B cell (primary cell): ENCODE measurements at regions of chr1 and their contacts with region 1.

Region 1: DNA sequence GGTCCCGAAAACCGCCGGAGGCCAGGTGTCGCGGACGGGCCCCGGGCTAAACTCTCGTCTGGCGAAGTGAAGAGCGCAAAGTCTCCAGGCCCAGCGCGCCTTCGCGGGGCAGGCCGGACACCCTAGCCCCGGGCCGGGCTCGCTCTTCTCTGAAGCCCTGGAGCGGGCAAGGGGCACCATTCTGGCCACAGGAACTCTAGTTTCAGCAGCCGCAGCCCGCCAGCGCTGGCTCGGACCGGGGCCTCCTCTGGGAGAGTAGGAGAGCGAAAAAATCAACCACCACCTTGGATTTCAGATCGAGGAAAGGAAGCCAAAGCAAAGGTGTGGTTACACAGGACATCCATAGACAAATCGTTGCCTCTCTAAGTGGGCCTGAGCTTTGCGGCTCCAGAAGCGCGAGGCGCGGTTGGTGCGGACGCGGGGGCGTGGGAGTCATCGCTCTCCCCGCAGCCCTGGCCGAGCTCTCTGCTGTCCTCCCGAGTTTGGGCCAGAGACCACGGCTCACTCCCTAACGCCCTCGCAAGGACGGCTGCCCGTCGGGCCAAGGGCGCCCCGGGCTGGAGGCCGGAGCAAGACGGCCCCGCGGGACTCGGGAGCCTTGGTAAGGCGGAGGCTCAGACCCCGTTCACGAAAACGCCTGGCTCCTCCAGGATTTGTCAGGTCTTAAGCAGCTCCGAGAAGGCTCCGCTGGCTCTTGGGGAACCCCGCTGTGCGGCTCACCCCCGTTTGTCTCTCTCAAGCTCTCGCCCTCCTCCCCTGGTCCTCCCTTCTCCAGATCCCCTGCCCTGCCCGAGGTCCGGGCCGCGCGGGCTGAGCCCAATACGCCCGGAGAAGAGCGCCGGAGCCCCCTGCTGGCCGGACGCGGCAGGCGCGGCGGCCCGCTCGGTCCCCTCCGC is 132.9 kb upstream of the DPYD start:
- DNase-seq: peak; percentile 67
- ATAC-seq: peak; percentile 88
- H3K4me3 ChIP-seq: peak overlapping the region in 4 of 5 experiments; percentile 9 to 47 (median 40)
- H3K4me3 Mint-ChIP-seq: peak overlapping the region; percentile 57
- H3K27ac ChIP-seq: no peak overlapping the region
- H3K27ac Mint-ChIP-seq: no peak overlapping the region
- H3K4me1 ChIP-seq: peaks cover 15 to 24% of the 10 kb centered on the region in 2 donors
- H3K4me1 Mint-ChIP-seq: peaks cover 15% of the 10 kb centered on the region
- H3K27me3 ChIP-seq: peaks cover 0 to 52% (median 42%) of the 10 kb centered on the region in 4 experiments
- H3K27me3 Mint-ChIP-seq: peaks cover 59% of the 10 kb centered on the region
- CTCF ChIP-seq: peak; percentile 82

Region 2: DNA sequence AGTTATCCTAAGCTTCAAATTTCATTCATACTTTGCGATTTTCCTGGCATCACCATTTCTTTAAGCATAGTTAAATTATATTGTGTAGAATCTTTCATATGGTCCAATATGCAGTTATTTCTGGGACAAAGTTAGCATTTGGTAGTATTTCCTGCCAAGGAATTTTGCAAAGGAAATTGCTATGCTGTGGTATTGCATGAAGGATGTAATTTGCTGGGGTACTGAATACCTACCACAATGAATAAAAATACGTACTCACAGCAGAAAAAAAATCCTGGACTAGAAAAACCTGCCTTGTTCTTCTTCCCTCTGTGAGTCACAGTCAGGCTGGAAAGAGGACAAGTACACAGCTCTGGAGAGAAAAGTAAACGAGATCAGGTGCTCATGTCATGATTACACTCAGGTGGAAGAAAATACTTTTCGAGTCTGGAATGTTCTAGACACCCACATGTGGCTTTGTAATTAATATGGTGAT is 1090.9 kb before region 1 on chr1:
- CTCF ChIA-PET with region 1: interaction called, 21 read pairs
- POLR2A ChIA-PET with region 1: no interaction called
- intact Hi-C with region 1: no loop called
- DNase-seq: no peak
- ATAC-seq: no peak
- H3K4me3 ChIP-seq: no peak overlapping the region
- H3K4me3 Mint-ChIP-seq: no peak overlapping the region
- H3K27ac ChIP-seq: no peak overlapping the region
- H3K27ac Mint-ChIP-seq: no peak overlapping the region
- H3K4me1 ChIP-seq: no peaks in the 10 kb centered on the region
- H3K4me1 Mint-ChIP-seq: no peaks in the 10 kb centered on the region
- H3K27me3 ChIP-seq: no peaks in the 10 kb centered on the region
- H3K27me3 Mint-ChIP-seq: peaks cover 7% of the 10 kb centered on the region
- CTCF ChIP-seq: no peak

Region 3: DNA sequence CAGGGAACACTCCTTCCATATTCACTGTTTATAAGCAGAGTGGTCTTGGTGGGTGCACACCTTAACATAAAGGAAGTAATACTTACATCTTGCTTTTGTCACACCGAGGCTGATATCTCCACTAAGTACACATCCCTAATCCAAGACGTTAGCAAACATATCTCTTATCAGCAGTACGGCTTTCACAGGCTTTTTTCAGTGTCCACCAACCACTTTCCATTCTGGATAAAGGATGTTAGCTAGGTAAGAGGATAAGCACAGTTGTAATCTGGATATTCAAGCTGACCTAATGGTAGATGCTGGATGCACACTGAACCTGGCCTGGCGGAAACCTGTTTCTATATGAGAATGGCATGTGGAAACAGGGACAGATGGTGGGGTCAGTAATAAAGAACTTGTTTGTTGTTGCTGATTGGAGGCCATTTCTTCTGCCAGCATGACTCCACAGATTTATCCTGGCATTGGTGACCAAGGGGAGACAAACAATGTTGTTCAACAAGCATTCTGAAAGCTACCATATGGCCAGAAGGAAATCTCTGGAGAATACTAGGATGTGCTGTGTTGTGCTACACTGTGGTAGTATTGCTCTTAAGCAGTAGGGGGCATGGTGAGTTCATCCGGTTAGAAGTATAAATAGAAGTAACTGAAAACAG is 915.7 kb before region 1 on chr1:
- CTCF ChIA-PET with region 1: interaction called, 10 read pairs
- POLR2A ChIA-PET with region 1: no interaction called
- intact Hi-C with region 1: loop called (anchors 1 kb)
- DNase-seq: peak; percentile 43
- ATAC-seq: peak; percentile 39
- H3K4me3 ChIP-seq: peak overlapping the region in 1 of 5 experiments; percentile 7
- H3K4me3 Mint-ChIP-seq: peak overlapping the region; percentile 23
- H3K27ac ChIP-seq: no peak overlapping the region
- H3K27ac Mint-ChIP-seq: no peak overlapping the region
- H3K4me1 ChIP-seq: peaks cover 8 to 9% of the 10 kb centered on the region in 2 donors
- H3K4me1 Mint-ChIP-seq: peaks cover 9% of the 10 kb centered on the region
- H3K27me3 ChIP-seq: no peaks in the 10 kb centered on the region
- H3K27me3 Mint-ChIP-seq: no peaks in the 10 kb centered on the region
- CTCF ChIP-seq: peak; percentile 61

Region 4: GRCh38 chr1:97186404-97186803 is 867.3 kb before region 1 on chr1:
- CTCF ChIA-PET with region 1: no interaction called
- POLR2A ChIA-PET with region 1: no interaction called
- intact Hi-C with region 1: loop called (anchors 10 kb)
- DNase-seq: no peak
- ATAC-seq: no peak
- H3K4me3 ChIP-seq: no peak overlapping the region
- H3K4me3 Mint-ChIP-seq: no peak overlapping the region
- H3K27ac ChIP-seq: no peak overlapping the region
- H3K27ac Mint-ChIP-seq: no peak overlapping the region
- H3K4me1 ChIP-seq: no peaks in the 10 kb centered on the region
- H3K4me1 Mint-ChIP-seq: peaks cover 7% of the 10 kb centered on the region
- H3K27me3 ChIP-seq: no peaks in the 10 kb centered on the region
- H3K27me3 Mint-ChIP-seq: no peaks in the 10 kb centered on the region
- CTCF ChIP-seq: no peak

Region 5: GRCh38 chr1:97243973-97244560 is 809.7 kb before region 1 on chr1:
- CTCF ChIA-PET with region 1: interaction called, 6 read pairs
- POLR2A ChIA-PET with region 1: no interaction called
- intact Hi-C with region 1: loop called (anchors 5 kb)
- DNase-seq: no peak
- ATAC-seq: no peak
- H3K4me3 ChIP-seq: no peak overlapping the region
- H3K4me3 Mint-ChIP-seq: no peak overlapping the region
- H3K27ac ChIP-seq: no peak overlapping the region
- H3K27ac Mint-ChIP-seq: no peak overlapping the region
- H3K4me1 ChIP-seq: no peaks in the 10 kb centered on the region
- H3K4me1 Mint-ChIP-seq: no peaks in the 10 kb centered on the region
- H3K27me3 ChIP-seq: no peaks in the 10 kb centered on the region
- H3K27me3 Mint-ChIP-seq: no peaks in the 10 kb centered on the region
- CTCF ChIP-seq: peak; percentile 40

Region 6: GRCh38 chr1:97668945-97669344 is 384.8 kb before region 1 on chr1:
- CTCF ChIA-PET with region 1: interaction called, 3 read pairs
- POLR2A ChIA-PET with region 1: no interaction called
- intact Hi-C with region 1: loop called (anchors 2 kb)
- DNase-seq: peak; percentile 6
- ATAC-seq: no peak
- H3K4me3 ChIP-seq: no peak overlapping the region
- H3K4me3 Mint-ChIP-seq: no peak overlapping the region
- H3K27ac ChIP-seq: no peak overlapping the region
- H3K27ac Mint-ChIP-seq: no peak overlapping the region
- H3K4me1 ChIP-seq: no peaks in the 10 kb centered on the region
- H3K4me1 Mint-ChIP-seq: no peaks in the 10 kb centered on the region
- H3K27me3 ChIP-seq: no peaks in the 10 kb centered on the region
- H3K27me3 Mint-ChIP-seq: no peaks in the 10 kb centered on the region
- CTCF ChIP-seq: no peak

Region 7: DNA sequence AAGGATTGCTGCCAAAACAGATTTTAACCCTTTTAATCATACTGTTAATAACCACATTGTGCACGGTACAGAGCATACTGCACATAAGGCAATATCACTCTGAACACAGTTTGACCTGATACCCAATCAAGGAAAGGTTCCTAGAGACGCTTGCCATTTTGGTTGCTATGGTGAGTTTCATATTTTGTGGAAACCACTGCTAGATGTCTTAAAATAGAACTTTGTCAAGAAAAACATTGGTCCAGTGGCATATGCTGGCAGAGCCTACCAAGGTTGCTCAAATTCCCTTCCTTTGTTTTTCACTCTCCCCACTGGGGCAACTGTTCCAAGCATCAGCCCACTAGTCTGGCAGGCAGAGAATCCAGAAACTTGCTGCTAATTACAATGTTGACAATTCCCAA is 18.1 kb before region 1 on chr1:
- CTCF ChIA-PET with region 1: no interaction called
- POLR2A ChIA-PET with region 1: no interaction called
- intact Hi-C with region 1: no loop called
- DNase-seq: no peak
- ATAC-seq: no peak
- H3K4me3 ChIP-seq: no peak overlapping the region
- H3K4me3 Mint-ChIP-seq: no peak overlapping the region
- H3K27ac ChIP-seq: no peak overlapping the region
- H3K27ac Mint-ChIP-seq: no peak overlapping the region
- H3K4me1 ChIP-seq: no peaks in the 10 kb centered on the region
- H3K4me1 Mint-ChIP-seq: no peaks in the 10 kb centered on the region
- H3K27me3 ChIP-seq: peaks cover 0 to 4% (median 0%) of the 10 kb centered on the region in 4 experiments
- H3K27me3 Mint-ChIP-seq: peaks cover 2% of the 10 kb centered on the region
- CTCF ChIP-seq: no peak